Naive thymus-derived CD4-positive, alpha-beta T cell (primary cell): ENCODE measurements at regions of chr11 and their contacts with region 1.

Region 1: DNA sequence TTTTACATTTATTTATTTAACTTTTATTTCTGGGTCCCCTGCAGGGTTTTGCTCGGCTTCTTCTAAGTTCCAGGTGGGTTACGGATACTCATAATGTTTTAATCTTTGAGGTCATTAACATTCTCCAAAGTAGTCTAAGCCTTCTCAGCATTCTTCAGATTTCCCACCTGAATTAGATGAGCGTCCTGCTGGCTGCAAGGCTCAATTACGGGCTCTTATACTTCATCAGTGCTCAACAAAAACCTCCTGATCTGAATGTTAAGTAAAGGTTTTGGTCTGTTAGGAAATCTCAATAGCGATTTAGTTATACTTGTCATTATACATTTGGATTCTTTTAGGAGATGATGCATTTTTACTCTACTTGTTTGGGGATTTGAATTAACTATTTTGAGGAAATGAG is 27.3 kb upstream of the NFRKB start:
- DNase-seq: peak in 1 of 9 donors; percentile 0
- ATAC-seq: no peak
- H3K4me3 ChIP-seq: no peak overlapping the region
- H3K4me3 Mint-ChIP-seq: peak overlapping the region in 1 of 10 donors; percentile 35
- H3K27ac ChIP-seq: no peak overlapping the region
- H3K27ac Mint-ChIP-seq: peak overlapping the region in 7 of 9 donors; percentile 13 to 58 (median 28)
- H3K4me1 ChIP-seq: peaks cover 0 to 4% of the 10 kb centered on the region in 2 donors
- H3K4me1 Mint-ChIP-seq: peaks cover 6 to 22% (median 18%) of the 10 kb centered on the region in 7 donors
- H3K27me3 ChIP-seq: no peaks in the 10 kb centered on the region
- H3K27me3 Mint-ChIP-seq: no peaks in the 10 kb centered on the region

Region 2: GRCh38 chr11:129766898-129767604 is 155.6 kb before region 1 on chr11:
- CTCF ChIA-PET with region 1: no interaction called
- POLR2A ChIA-PET with region 1: no interaction called
- intact Hi-C with region 1: loop called in 1 of 2 experiments (anchors 5 kb)
- DNase-seq: peak in 6 of 9 donors; percentile 14 to 39 (median 20)
- ATAC-seq: peak; percentile 40
- H3K4me3 ChIP-seq: no peak overlapping the region
- H3K4me3 Mint-ChIP-seq: peak overlapping the region in 2 of 10 donors; percentile 1 to 50
- H3K27ac ChIP-seq: no peak overlapping the region
- H3K27ac Mint-ChIP-seq: peak overlapping the region in 2 of 9 donors; percentile 6 to 29
- H3K4me1 ChIP-seq: no peaks in the 10 kb centered on the region
- H3K4me1 Mint-ChIP-seq: peaks cover 0 to 11% (median 5%) of the 10 kb centered on the region in 7 donors
- H3K27me3 ChIP-seq: no peaks in the 10 kb centered on the region
- H3K27me3 Mint-ChIP-seq: peaks cover 0 to 10% (median 4%) of the 10 kb centered on the region in 5 donors

Region 3: DNA sequence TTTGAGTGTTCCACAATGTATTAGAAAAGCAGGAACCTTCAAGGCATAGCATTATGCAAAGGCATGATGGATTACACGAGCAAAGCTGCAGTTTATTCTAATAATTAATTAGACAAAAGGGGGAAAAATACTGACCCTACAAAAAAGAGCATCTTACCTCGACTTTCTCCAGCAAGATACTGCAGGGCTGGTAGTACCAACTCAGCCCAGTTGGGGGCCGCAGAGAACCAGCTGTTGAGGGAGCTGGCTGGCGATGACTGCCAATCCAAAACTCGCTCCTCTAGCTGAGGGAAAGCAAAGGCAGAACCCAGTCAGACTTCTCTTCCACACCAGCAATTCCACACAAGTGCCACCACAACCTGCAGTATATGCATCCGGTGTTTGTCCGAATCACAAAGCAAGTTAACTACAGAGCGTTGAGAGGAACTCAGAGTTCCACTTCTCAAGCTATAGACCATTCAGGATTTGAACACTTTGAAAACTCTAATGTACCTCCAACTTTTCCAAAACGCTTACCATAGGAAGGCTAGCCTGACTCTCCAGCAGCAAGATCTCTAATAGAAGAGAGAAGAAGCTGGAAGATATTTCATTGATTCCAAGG is 41.0 kb before region 1 on chr11:
- CTCF ChIA-PET with region 1: interaction called, 3 read pairs
- POLR2A ChIA-PET with region 1: no interaction called
- intact Hi-C with region 1: loop called in 1 of 2 experiments (anchors 1 kb)
- DNase-seq: peak; percentile 24 to 54 (median 44)
- ATAC-seq: peak; percentile 71
- H3K4me3 ChIP-seq: no peak overlapping the region
- H3K4me3 Mint-ChIP-seq: no peak overlapping the region
- H3K27ac ChIP-seq: no peak overlapping the region
- H3K27ac Mint-ChIP-seq: peak overlapping the region in 2 of 9 donors; percentile 56 to 63
- H3K4me1 ChIP-seq: no peaks in the 10 kb centered on the region
- H3K4me1 Mint-ChIP-seq: peaks cover 0 to 20% (median 4%) of the 10 kb centered on the region in 7 donors
- H3K27me3 ChIP-seq: no peaks in the 10 kb centered on the region
- H3K27me3 Mint-ChIP-seq: no peaks in the 10 kb centered on the region

Region 4: GRCh38 chr11:130220311-130221035 is 297.8 kb after region 1 on chr11:
- CTCF ChIA-PET with region 1: no interaction called
- POLR2A ChIA-PET with region 1: no interaction called
- intact Hi-C with region 1: no loop called
- DNase-seq: no peak
- ATAC-seq: no peak
- H3K4me3 ChIP-seq: no peak overlapping the region
- H3K4me3 Mint-ChIP-seq: no peak overlapping the region
- H3K27ac ChIP-seq: no peak overlapping the region
- H3K27ac Mint-ChIP-seq: no peak overlapping the region
- H3K4me1 ChIP-seq: no peaks in the 10 kb centered on the region
- H3K4me1 Mint-ChIP-seq: peaks cover 0 to 5% (median 0%) of the 10 kb centered on the region in 7 donors
- H3K27me3 ChIP-seq: no peaks in the 10 kb centered on the region
- H3K27me3 Mint-ChIP-seq: peaks cover 0 to 5% (median 0%) of the 10 kb centered on the region in 5 donors

Region 5: GRCh38 chr11:130323452-130324450 is 401.1 kb after region 1 on chr11:
- CTCF ChIA-PET with region 1: no interaction called
- POLR2A ChIA-PET with region 1: no interaction called
- intact Hi-C with region 1: no loop called
- DNase-seq: no peak
- ATAC-seq: no peak
- H3K4me3 ChIP-seq: no peak overlapping the region
- H3K4me3 Mint-ChIP-seq: no peak overlapping the region
- H3K27ac ChIP-seq: no peak overlapping the region
- H3K27ac Mint-ChIP-seq: no peak overlapping the region
- H3K4me1 ChIP-seq: no peaks in the 10 kb centered on the region
- H3K4me1 Mint-ChIP-seq: peaks cover 0 to 4% (median 0%) of the 10 kb centered on the region in 7 donors
- H3K27me3 ChIP-seq: no peaks in the 10 kb centered on the region
- H3K27me3 Mint-ChIP-seq: no peaks in the 10 kb centered on the region